ENCODE measurements at regions of chr7 and their contacts with region 1.

Region 1: GRCh38 chr7:97835296-97836138 is 36.7 kb downstream of the ASNS start:
- DNase-seq: peak; percentile 56 to 81
- H3K4me3 ChIP-seq: no peak overlapping the region
- H3K4me1 ChIP-seq: no peaks in the 10 kb centered on the region
- H3K27me3 ChIP-seq: peaks cover 11% of the 10 kb centered on the region; the same call in 1 of the 2 replicates

Region 2: GRCh38 chr7:95916573-95917297 is 1918.8 kb before region 1 on chr7:
- in situ Hi-C with region 1: loop called (anchors 25 kb)
- DNase-seq: peak; percentile 30 to 88
- H3K4me3 ChIP-seq: no peak overlapping the region
- H3K4me1 ChIP-seq: peaks cover 6% of the 10 kb centered on the region
- H3K27me3 ChIP-seq: peaks cover 14% of the 10 kb centered on the region

Region 3: GRCh38 chr7:97117372-97118188 is 717.9 kb before region 1 on chr7 and contains the start of gene SDHAF3:
- in situ Hi-C with region 1: loop called (anchors 25 kb)
- DNase-seq: peak; percentile 94 to 98
- H3K4me3 ChIP-seq: peak within 1 kb of the TSS; percentile 61
- H3K4me1 ChIP-seq: peaks cover 21% of the 10 kb centered on the region
- H3K27me3 ChIP-seq: no peaks in the 10 kb centered on the region